ENCODE measurements at regions of chr1 and their contacts with region 1.

Region 1: GRCh38 chr1:212749821-212750535 is 41.6 kb downstream of the NSL1 start:
- DNase-seq: peak; percentile 51
- ATAC-seq: peak; percentile 65
- H3K4me3 ChIP-seq: peak overlapping the region; percentile 32; the same call in 1 of the 2 replicates
- H3K27ac ChIP-seq: peak overlapping the region; percentile 59
- H3K4me1 ChIP-seq: peaks cover 41% of the 10 kb centered on the region
- H3K27me3 ChIP-seq: no peaks in the 10 kb centered on the region
- CTCF ChIP-seq: peak; percentile 52 to 69 (median 53); a peak in 5 of 6 replicates
- EP300 ChIP-seq: no peak; a peak in 1 of 4 replicates
- POLR2A ChIP-seq: no peak
- RAD21 ChIP-seq: peak; percentile 47

Region 2: GRCh38 chr1:212683357-212683722 is 66.6 kb before region 1 on chr1:
- CTCF ChIA-PET with region 1: interaction called, 16 read pairs
- POLR2A ChIA-PET with region 1: interaction called, 3 read pairs
- RAD21 ChIA-PET with region 1: interaction called, 3 read pairs
- SMC1A ChIA-PET with region 1: interaction called, 6 read pairs
- in situ Hi-C with region 1: no loop called
- intact Hi-C with region 1: no loop called
- DNase-seq: peak; percentile 81
- ATAC-seq: peak; percentile 79
- H3K4me3 ChIP-seq: peak overlapping the region; percentile 33; the same call in 1 of the 2 replicates
- H3K27ac ChIP-seq: peak overlapping the region; percentile 90
- H3K4me1 ChIP-seq: peaks cover 62% of the 10 kb centered on the region
- H3K27me3 ChIP-seq: no peaks in the 10 kb centered on the region
- CTCF ChIP-seq: no peak
- EP300 ChIP-seq: peak in 1 of 2 experiments; percentile 52; a peak in 1 of 4 replicates
- POLR2A ChIP-seq: peak; percentile 80
- RAD21 ChIP-seq: no peak

Region 3: DNA sequence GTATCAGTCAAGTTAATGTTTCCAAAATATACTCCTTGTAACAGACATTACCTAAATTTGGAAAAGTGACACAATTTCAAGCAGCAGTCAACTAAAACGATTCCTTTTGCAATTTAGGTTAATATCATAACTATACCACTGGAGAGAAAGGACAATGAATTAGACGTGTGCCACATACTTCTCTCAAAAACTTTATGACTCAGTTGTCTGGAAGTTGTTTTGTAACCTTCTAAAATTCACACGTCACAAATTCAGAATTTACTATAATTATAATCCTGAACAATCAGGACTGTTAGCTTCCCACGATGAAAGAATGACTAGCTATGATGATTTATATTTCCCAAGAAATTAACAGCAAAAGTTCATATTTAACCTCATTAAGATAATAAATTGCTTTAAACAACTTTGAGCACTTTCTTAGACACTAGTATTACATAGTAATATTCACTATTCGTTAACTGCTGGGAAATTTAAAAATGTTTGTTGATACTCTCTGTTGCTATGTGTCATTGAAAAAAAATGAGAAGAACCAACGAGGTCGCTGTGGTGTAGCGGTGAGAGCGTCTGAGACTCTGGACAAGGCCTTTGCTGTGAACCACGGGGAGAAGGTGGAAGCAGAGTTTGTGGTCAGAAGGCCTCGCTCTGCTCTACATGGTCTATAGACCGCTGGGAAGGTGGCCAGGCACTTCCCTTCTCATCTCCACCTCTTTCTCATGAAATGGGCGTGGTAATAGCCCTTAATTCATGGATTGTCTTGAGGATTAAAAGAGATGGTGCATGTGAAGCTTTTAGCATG is 22.4 kb before region 1 on chr1:
- CTCF ChIA-PET with region 1: interaction called, 12 read pairs
- POLR2A ChIA-PET with region 1: interaction called, 3 read pairs
- RAD21 ChIA-PET with region 1: interaction called, 4 read pairs
- SMC1A ChIA-PET with region 1: interaction called, 3 read pairs
- in situ Hi-C with region 1: no loop called
- intact Hi-C with region 1: no loop called
- DNase-seq: no peak
- ATAC-seq: no peak
- H3K4me3 ChIP-seq: no peak overlapping the region
- H3K27ac ChIP-seq: no peak overlapping the region
- H3K4me1 ChIP-seq: peaks cover 9% of the 10 kb centered on the region
- H3K27me3 ChIP-seq: no peaks in the 10 kb centered on the region
- CTCF ChIP-seq: no peak
- EP300 ChIP-seq: no peak
- POLR2A ChIP-seq: no peak
- RAD21 ChIP-seq: no peak

Region 4: DNA sequence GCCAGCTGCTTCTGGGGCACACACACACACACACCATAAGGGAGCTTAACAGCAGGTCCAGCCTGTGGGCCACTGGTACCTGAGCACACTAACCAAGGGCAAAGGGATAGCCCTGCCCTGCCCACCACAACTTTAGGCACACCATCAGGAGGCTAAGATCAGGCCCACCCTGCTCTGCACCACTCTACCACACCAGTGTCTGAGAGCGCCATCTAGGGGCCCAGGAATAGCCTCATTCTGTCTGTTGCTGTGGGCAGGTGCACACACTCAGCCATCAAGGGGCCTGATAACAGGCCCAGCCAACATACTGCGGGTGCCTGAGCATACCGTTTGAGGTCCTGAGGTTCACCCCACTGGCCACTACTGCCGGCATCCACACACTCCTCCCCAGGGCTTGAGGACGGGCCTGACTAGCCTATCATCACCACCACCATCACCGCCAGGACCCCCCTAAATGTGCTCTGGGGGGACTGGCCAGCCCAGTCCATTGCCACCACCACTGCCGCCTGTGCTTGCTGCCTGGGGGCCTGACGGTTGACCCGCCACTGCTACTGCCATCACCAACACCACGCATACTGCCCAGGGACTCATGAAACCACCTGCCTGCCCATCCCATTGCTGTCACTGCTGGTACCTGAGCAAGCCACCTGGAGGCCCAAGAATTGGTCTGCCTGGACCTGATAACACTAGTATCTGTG is 10.3 kb after region 1 on chr1:
- CTCF ChIA-PET with region 1: interaction called, 16 read pairs
- POLR2A ChIA-PET with region 1: no interaction called
- RAD21 ChIA-PET with region 1: interaction called, 4 read pairs
- SMC1A ChIA-PET with region 1: interaction called, 8 read pairs
- in situ Hi-C with region 1: no loop called
- intact Hi-C with region 1: no loop called
- DNase-seq: no peak
- ATAC-seq: peak; percentile 99
- H3K4me3 ChIP-seq: no peak overlapping the region
- H3K27ac ChIP-seq: no peak overlapping the region
- H3K4me1 ChIP-seq: no peaks in the 10 kb centered on the region
- H3K27me3 ChIP-seq: no peaks in the 10 kb centered on the region
- CTCF ChIP-seq: peak; percentile 55 to 67 (median 63); a peak in 5 of 6 replicates
- EP300 ChIP-seq: no peak
- POLR2A ChIP-seq: no peak
- RAD21 ChIP-seq: peak; percentile 69

Region 5: DNA sequence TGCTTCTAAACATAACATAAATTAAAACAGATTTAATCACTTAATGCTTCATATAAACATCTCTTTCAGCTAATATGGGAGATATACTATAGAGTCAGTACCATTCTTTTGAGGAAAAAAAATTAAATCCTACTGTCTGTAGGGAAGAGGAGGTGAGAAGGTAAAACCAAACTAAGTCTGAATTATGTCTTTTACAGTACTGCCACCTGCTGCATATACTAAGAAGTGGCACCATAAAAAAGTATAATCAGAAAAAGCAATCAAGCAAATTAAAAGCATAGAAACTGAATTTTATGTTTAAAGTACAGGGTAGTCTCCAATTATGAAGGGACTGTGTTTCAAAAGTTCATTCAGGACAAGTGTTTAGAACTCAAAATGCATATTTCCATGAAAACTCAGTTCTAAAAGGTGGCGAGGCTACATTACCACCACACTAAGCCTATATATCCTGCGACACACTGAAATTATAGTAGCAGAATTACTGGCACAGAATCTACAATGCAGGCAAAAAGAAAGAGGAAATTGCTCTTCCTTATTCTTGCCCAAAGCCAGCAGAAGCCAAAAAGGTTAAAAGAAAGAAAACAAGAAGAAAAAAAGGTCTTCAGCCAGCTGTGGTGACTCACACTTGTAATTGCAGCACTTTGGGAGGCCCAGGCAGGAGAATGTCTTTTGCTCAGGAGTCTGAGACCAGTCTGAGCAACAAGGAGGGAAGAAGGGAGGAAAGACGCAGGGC is 32.6 kb after region 1 on chr1:
- CTCF ChIA-PET with region 1: interaction called, 33 read pairs
- POLR2A ChIA-PET with region 1: interaction called, 3 read pairs
- RAD21 ChIA-PET with region 1: interaction called, 11 read pairs
- SMC1A ChIA-PET with region 1: interaction called, 28 read pairs
- in situ Hi-C with region 1: no loop called
- intact Hi-C with region 1: no loop called
- DNase-seq: no peak
- ATAC-seq: peak; percentile 68
- H3K4me3 ChIP-seq: no peak overlapping the region
- H3K27ac ChIP-seq: no peak overlapping the region
- H3K4me1 ChIP-seq: peaks cover 10% of the 10 kb centered on the region; the same call in 1 of the 2 replicates
- H3K27me3 ChIP-seq: no peaks in the 10 kb centered on the region
- CTCF ChIP-seq: peak; percentile 53 to 71 (median 64); a peak in 5 of 6 replicates
- EP300 ChIP-seq: no peak
- POLR2A ChIP-seq: no peak
- RAD21 ChIP-seq: peak; percentile 81

Measured in GM12878 (cell line).